Lower leg skin (tissue), 4 donors: ENCODE measurements at regions of chr10 and their contacts with region 1.

Region 1: DNA sequence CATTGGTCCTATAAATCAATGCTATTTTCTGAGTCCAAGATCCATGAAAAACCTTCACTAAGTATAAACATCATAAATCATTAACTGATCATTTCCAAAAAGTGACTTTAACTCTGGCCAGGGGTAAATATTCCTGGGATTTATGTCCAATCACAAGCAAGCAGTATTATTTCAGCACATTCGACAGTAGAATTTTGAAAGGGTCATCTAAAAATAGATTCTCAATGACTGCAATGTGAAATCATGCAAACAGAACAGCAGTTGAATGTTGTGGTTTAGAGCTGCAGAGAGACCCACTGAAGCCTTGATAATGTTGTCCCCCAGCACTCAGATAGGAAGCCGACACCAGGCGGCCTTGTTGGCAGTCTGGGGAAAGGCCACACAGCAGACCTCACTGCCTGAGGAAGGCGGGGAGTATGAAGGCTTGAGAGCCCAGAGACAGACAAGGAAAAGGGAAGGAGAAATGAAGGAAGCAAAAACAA is 38.1 kb downstream of the FAM107B start:
- DNase-seq: no peak
- H3K4me3 ChIP-seq: no peak overlapping the region
- CTCF ChIP-seq: no peak
- POLR2A ChIP-seq: no peak

Region 2: DNA sequence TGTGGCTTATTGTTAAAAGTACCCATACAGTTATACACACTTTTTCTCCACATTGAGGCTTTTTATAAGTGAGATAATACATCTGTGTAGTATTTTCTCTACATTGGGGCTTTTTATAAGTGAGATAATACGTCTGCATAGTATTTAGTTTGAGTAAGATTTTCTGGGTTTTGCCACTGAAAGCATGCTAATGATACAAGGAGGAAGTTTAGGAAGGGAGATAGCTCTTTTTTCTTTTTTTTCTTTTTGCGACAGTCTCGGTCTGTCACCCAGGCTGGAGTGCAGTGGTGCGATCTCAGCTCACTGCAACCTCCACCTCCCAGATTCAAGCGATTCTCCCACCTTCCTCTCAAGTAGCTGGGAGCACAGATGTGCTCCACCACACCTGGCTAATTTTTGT is 24.7 kb after region 1 on chr10:
- intact Hi-C with region 1: loop called (anchors 1 kb)
- DNase-seq: no peak
- H3K4me3 ChIP-seq: no peak overlapping the region
- CTCF ChIP-seq: no peak
- POLR2A ChIP-seq: no peak